Ascending aorta (tissue), 2 donors: ENCODE measurements at regions of chr4 and their contacts with region 1.

Region 1: GRCh38 chr4:141133146-141133998 is at the start of gene RNF150:
- DNase-seq: peak; percentile 29 to 88
- H3K4me3 ChIP-seq: peak within 1 kb of the TSS; percentile 89 to 92
- H3K27ac ChIP-seq: peak within 1 kb of the TSS; percentile 72 to 75
- H3K4me1 ChIP-seq: no peaks in the 10 kb centered on the region
- H3K27me3 ChIP-seq: no peaks in the 10 kb centered on the region
- CTCF ChIP-seq: peak; percentile 59 to 83 (median 71)
- total RNA-seq, gene RNF150: 31.2 TPM

Region 2: DNA sequence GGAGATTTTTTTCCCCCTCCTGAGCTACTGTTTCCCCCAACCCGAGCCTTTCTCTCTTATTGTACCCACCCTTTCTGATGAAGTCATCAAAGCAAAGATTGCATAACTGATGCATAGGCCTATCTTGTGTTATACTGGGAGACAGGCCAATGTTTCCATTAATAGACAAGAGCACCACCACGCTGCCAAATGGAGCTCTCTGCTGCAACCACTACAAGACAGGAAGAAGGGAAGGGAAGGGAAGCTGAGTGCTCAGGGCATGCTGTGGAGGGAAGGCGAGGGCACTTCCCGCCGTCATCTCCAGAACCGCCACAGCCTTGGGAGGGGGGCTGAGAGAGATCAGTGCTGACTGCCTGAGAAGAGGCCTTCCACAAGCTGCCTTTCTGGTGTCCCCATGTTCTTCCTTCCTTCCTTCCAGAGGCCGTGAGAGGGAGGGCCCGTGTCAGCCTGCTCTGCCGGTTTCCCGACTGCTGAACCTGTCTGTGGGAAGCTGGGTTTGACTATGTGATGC is 1392.8 kb before region 1 on chr4:
- intact Hi-C with region 1: loop called (anchors 5 kb)
- DNase-seq: peak in 1 of 2 donors; percentile 83
- H3K4me3 ChIP-seq: peak overlapping the region in 1 of 2 donors; percentile 19
- H3K27ac ChIP-seq: peak overlapping the region; percentile 71 to 77
- H3K4me1 ChIP-seq: peaks cover 0 to 19% of the 10 kb centered on the region in 2 donors
- H3K27me3 ChIP-seq: no peaks in the 10 kb centered on the region
- CTCF ChIP-seq: peak in 2 of 3 experiments; percentile 4 to 17

Region 3: GRCh38 chr4:140523857-140524742 is 609.3 kb before region 1 on chr4 and contains the start of gene ELMOD2:
- intact Hi-C with region 1: loop called (anchors 5 kb)
- DNase-seq: peak; percentile 95 to 99
- H3K4me3 ChIP-seq: peak within 1 kb of the TSS; percentile 87 to 97
- H3K27ac ChIP-seq: peak within 1 kb of the TSS; percentile 66 to 92
- H3K4me1 ChIP-seq: peaks cover 0 to 4% of the 10 kb centered on the region in 2 donors
- H3K27me3 ChIP-seq: no peaks in the 10 kb centered on the region
- CTCF ChIP-seq: peak; percentile 88 to 97 (median 96)
- total RNA-seq, gene ELMOD2: 3.9 TPM

Region 4: DNA sequence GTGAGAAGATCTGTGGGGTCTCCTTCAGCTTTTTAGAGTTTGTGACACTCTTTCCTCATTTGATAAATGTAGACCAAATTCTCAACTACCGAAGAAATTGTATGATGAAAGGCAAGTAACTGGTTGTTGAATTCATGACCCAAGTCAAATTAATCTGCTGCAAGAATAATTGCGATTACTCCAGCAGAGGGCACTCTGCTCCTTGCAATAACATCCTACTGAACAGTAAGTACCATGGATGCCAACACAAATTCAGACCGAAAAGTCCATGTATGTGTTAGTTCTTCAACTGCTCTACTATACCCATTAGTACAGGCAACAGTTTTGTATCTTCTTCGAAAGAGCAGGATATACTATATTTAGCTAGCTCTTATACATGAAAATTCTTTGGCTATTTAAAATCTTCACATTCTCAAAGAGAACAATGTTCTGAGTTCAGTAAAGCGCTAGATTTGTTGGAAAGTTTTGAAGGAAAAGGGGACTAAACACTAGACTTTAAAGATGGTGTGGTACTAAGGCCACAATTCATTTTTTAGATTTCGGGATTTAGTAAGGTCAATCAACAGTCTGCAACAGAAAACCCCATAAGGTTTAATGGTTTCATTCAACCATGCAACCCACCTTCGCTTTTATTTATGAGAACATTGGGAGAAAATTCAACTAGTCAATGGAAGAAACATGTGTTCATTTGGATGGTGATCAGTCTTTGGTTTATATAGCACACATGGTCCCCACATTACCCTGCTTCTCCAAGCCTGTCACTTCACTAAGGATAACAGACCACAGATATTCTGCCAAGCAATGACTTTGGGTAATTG is 271.8 kb before region 1 on chr4:
- intact Hi-C with region 1: loop called (anchors 1 kb)
- DNase-seq: peak in 1 of 2 donors; percentile 88
- H3K4me3 ChIP-seq: no peak overlapping the region
- H3K27ac ChIP-seq: no peak overlapping the region
- H3K4me1 ChIP-seq: no peaks in the 10 kb centered on the region
- H3K27me3 ChIP-seq: no peaks in the 10 kb centered on the region
- CTCF ChIP-seq: peak; percentile 63 to 82 (median 68)

Region 5: GRCh38 chr4:141002323-141002805 is 131.0 kb before region 1 on chr4:
- intact Hi-C with region 1: loop called (anchors 5 kb)
- DNase-seq: no peak
- H3K4me3 ChIP-seq: peak overlapping the region in 1 of 2 donors; percentile 12
- H3K27ac ChIP-seq: peak overlapping the region; percentile 51 to 71
- H3K4me1 ChIP-seq: peaks cover 0 to 6% of the 10 kb centered on the region in 2 donors
- H3K27me3 ChIP-seq: no peaks in the 10 kb centered on the region
- CTCF ChIP-seq: no peak

Region 6: DNA sequence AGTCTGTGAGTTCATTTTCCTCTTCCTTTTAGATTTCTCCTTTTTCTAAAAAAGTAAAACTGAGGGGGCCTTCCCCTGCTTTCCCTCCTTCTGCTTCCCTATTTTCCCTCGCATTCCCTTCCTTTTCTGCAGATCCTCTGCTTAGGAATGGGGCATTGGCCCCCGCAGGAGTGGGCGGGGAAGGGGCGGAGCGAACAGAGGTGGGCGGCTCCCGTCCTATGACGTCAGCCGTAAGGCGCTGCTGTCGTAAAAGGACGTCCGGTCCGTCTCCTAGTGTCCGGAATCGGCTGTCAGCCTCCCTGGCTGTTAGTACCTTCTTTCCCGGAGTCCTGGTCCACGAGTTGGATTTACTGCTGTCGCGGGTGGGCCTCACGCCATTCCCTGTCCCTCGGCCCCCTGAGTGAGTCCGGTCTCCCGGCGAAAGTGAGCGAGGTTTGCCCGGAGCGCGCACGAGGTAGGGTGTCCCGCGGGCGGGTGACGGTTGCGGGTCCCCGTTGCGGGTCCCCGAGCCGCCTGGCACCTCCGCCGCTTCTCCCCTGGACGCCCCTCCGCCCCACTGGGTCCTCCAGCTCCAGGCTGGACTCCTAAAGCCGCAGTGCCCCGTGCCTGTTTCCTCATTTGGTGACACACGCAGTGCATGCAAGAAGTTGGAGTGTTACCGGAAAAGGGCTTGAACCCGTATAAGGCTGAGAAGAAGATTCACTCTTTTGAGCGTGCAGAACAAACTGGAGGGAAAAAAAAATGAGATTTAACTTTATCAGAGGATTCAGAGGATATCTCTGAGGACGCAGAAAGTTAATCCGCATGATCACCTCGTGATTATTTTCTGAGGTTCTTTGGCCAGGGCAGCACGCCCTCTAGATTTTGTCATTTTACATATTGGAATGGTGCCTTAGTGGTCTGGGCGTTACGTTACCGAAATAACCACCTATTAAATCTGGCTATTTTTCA is 87.6 kb after region 1 on chr4 and contains the start of gene ZNF330:
- intact Hi-C with region 1: loop called (anchors 5 kb)
- DNase-seq: peak; percentile 36 to 96
- H3K4me3 ChIP-seq: peak within 1 kb of the TSS; percentile 79 to 96
- H3K27ac ChIP-seq: peak within 1 kb of the TSS; percentile 94 to 98
- H3K4me1 ChIP-seq: peaks cover 4 to 5% of the 10 kb centered on the region in 2 donors
- H3K27me3 ChIP-seq: no peaks in the 10 kb centered on the region
- CTCF ChIP-seq: peak in 1 of 3 experiments; percentile 37
- total RNA-seq, gene ZNF330: 7.9 TPM